ENCODE measurements at regions of chr1 and their contacts with region 1.

Region 1: DNA sequence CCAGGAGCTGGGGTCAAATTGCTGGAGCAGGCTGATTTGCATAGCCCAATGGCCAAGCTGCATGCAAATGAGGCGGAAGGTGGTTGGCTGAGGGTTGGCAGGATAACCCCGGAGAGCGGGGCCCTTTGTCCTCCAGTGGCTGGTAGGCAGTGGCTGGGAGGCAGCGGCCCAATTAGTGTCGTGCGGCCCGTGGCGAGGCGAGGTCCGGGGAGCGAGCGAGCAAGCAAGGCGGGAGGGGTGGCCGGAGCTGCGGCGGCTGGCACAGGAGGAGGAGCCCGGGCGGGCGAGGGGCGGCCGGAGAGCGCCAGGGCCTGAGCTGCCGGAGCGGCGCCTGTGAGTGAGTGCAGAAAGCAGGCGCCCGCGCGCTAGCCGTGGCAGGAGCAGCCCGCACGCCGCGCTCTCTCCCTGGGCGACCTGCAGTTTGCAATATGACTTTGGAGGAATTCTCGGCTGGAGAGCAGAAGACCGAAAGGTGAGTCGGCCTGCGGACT is at the start of gene GADD45A:
- DNase-seq: peak; percentile 96
- H3K4me3 Mint-ChIP-seq: peak within 1 kb of the TSS; percentile 91
- H3K27ac Mint-ChIP-seq: peak within 1 kb of the TSS; percentile 99
- H3K4me1 Mint-ChIP-seq: peaks cover 45% of the 10 kb centered on the region
- H3K27me3 Mint-ChIP-seq: no peaks in the 10 kb centered on the region
- total RNA-seq, gene GADD45A: 47.3 and 48.2 TPM in 2 replicates

Region 2: DNA sequence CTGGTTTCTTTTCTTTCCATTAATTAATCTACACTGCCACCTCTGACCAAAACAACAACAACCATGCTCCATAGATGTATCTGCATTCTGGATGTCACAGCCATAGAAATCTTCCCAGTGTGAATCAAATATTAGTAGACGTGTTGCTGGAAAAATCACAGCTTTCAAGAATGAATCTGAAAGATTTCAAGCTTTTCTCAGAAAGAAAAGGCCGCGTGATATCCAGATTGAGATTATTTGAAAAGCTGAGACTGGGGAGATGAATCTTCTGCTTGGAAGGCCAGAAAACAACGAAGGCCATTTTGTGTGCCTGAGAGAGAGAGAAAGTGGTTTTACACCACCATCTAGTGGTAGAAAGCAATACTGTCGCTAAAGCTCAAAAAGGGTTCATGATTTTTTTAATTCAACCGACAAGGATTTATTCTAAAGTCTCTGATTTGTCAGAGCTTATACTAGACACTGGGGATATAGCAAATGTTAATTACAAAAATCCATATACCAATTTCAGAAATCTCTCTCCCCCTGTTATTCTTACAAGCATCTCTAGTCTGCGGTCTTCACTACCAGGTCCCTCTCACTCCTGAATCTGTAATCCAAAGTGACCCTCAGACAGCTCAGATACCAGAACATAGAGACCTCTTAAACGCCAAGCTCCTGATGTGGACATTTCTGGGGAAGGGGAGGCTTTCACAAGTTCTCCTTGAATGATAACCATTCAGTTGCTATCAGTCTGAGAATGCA is 1238.7 kb before region 1 on chr1:
- intact Hi-C with region 1: loop called (anchors 10 kb)
- DNase-seq: peak; percentile 39
- H3K4me3 Mint-ChIP-seq: peak overlapping the region; percentile 56
- H3K27ac Mint-ChIP-seq: peak overlapping the region; percentile 95
- H3K4me1 Mint-ChIP-seq: peaks cover 32% of the 10 kb centered on the region
- H3K27me3 Mint-ChIP-seq: peaks cover 3% of the 10 kb centered on the region

Region 3: DNA sequence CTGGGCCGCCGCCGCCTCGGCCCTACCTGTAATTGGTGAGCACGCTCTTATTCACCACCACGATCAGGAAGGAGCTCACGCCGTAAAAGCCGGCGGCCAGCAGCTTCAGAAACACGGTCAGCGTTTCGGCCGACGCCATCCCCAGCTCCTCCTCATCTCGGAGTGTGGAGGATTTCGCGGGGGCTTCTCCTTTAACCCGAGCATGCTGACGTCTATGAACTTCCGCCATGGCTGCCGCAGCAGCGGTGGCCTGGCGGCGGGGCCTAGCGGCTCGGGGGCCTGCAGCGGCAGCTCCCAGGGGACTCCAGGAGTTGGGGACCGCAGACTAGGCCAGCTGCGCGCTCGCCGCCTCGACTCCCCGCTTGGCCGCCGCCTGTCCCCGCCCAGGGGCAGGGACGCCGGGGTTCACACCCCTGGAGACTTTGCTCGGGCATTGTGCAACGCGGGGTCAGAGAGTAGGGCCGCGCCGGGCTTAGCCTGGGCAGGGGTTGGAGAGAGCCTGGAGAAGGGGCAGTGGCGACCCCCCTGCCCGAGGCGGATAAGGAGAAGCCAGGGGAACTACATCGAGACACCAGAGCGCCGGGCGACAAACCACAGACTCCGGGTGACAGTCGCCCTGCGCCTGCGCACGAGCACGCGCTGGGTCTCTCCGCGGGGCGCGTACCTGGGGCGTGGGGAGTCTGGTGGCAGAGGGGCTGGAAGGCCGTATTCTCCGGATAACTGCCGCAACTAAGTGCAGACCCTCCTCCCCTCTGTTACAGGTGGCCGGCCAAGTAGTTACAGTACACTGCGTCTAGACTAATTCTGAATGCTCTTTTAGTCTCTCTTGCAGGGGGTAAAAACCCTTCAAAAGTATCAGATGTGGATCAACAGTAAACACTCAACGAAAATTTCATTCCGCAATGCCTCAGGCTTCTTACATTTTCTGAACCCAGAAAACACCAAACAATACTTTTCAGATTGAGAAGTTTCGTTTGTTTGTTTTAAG is 631.0 kb before region 1 on chr1 and contains the start of gene SLC35D1:
- intact Hi-C with region 1: loop called (anchors 2 kb)
- DNase-seq: peak; percentile 75
- H3K4me3 Mint-ChIP-seq: peak within 1 kb of the TSS; percentile 93
- H3K27ac Mint-ChIP-seq: peak within 1 kb of the TSS; percentile 94
- H3K4me1 Mint-ChIP-seq: peaks cover 49% of the 10 kb centered on the region
- H3K27me3 Mint-ChIP-seq: peaks cover 6% of the 10 kb centered on the region
- total RNA-seq, gene SLC35D1: 20.4 and 20.5 TPM in 2 replicates

Region 4: GRCh38 chr1:67274623-67275325 is 410.3 kb before region 1 on chr1:
- intact Hi-C with region 1: loop called (anchors 1 kb)
- DNase-seq: peak; percentile 54
- H3K4me3 Mint-ChIP-seq: no peak overlapping the region
- H3K27ac Mint-ChIP-seq: peak overlapping the region; percentile 80
- H3K4me1 Mint-ChIP-seq: peaks cover 68% of the 10 kb centered on the region
- H3K27me3 Mint-ChIP-seq: no peaks in the 10 kb centered on the region

Region 5: DNA sequence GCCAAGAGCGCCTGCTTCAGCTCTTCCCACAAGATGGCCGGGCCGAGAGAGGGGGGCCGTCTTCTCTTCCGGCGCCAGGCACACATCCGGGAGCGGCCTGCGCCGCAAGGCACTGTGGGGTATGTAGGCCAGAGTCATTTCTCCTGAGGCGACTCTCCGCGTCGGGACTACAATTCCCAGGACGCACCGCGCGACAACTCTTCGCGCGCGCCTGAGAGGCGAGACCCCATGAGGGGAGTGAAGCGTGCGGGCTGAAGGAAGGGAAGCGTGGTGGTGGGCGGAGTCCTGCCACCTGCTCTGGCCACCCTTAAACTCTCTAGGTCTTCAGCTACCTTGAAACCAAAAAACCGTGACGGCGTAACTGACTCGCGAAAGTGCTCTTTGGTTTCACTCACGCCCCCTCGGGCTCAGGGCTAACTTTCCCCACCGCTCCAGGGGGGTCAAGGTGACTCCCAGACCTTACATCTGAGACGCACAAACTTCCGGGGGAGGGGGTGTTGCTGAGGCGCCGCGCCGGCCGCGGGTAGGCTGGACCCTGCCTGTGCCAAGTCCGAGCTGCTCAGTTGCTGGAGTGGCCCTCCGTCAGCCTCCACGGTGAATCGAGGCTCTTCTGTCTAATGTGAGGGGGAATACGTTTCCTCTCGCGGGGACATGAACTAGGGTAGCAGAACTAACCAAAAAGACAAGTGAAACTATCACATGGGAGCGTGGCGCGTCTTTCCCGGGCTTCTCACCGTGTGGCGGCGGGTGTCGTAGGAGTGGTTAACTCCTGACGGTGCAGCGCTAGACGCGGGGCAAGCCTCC is 254.6 kb before region 1 on chr1 and contains the start of gene SERBP1:
- intact Hi-C with region 1: loop called (anchors 1 kb)
- DNase-seq: peak; percentile 95
- H3K4me3 Mint-ChIP-seq: peak within 1 kb of the TSS; percentile 90
- H3K27ac Mint-ChIP-seq: peak within 1 kb of the TSS; percentile 97
- H3K4me1 Mint-ChIP-seq: peaks cover 62% of the 10 kb centered on the region
- H3K27me3 Mint-ChIP-seq: no peaks in the 10 kb centered on the region
- total RNA-seq, gene SERBP1: 585 and 603 TPM in 2 replicates

Region 6: GRCh38 chr1:67460676-67461500 is 224.2 kb before region 1 on chr1:
- intact Hi-C with region 1: no loop called
- DNase-seq: no peak
- H3K4me3 Mint-ChIP-seq: no peak overlapping the region
- H3K27ac Mint-ChIP-seq: no peak overlapping the region
- H3K4me1 Mint-ChIP-seq: no peaks in the 10 kb centered on the region
- H3K27me3 Mint-ChIP-seq: peaks cover 9% of the 10 kb centered on the region

Region 7: DNA sequence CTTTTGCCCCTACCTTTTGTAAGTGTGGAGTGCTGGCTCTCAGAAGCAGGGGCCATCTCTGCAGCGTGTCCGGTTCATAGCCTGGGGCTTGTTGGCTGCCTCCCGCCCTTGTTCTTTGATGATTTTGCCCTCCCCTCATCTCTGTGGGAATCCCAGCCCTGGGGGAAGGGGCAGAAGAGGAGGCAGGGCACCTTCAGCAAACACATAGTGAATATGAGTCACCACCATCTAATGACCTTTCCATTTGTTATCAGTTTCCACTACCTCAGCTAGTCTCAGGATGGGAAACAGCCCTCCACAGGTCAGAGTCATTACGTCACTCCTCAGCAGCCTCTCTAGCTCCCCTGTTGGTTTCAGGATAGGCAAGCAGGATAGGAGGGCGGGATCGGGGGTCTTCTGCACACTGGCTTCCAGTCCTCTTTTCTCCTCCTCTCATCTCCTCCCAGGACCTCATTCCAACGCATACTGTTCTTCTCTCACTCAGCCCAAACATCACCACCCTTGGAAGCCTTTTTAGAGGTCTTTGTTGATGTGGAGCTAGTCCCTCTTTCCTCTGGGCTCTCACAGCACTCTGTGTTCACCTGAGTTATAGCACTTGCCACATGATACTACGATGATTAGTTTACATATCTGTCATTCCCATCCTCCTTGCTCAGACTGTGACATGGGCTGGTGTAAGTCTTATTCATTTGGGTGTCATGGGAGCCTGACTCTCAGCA is 15.7 kb after region 1 on chr1:
- intact Hi-C with region 1: loop called (anchors 2 kb)
- DNase-seq: no peak
- H3K4me3 Mint-ChIP-seq: no peak overlapping the region
- H3K27ac Mint-ChIP-seq: peak overlapping the region; percentile 20
- H3K4me1 Mint-ChIP-seq: peaks cover 16% of the 10 kb centered on the region
- H3K27me3 Mint-ChIP-seq: peaks cover 8% of the 10 kb centered on the region

Region 8: GRCh38 chr1:67945733-67946374 is 260.7 kb after region 1 on chr1:
- intact Hi-C with region 1: no loop called
- DNase-seq: no peak
- H3K4me3 Mint-ChIP-seq: no peak overlapping the region
- H3K27ac Mint-ChIP-seq: no peak overlapping the region
- H3K4me1 Mint-ChIP-seq: no peaks in the 10 kb centered on the region
- H3K27me3 Mint-ChIP-seq: no peaks in the 10 kb centered on the region

Measured in activated T-helper 1 cell treated with anti-CD3 and anti-CD28 coated beads, Interleukin-12 subunit alpha, Interleukin-12 subunit beta, Interleukin-2, Interleukin-4 antibody, amounts not matched to agents 30 ng/mL and 10 ng/mL and 1 ng/mL, durations not matched to agents 14 hours and 24 hours and 36 hours (primary cell).